ENCODE measurements at regions of chr4 and their contacts with region 1.

Region 1: DNA sequence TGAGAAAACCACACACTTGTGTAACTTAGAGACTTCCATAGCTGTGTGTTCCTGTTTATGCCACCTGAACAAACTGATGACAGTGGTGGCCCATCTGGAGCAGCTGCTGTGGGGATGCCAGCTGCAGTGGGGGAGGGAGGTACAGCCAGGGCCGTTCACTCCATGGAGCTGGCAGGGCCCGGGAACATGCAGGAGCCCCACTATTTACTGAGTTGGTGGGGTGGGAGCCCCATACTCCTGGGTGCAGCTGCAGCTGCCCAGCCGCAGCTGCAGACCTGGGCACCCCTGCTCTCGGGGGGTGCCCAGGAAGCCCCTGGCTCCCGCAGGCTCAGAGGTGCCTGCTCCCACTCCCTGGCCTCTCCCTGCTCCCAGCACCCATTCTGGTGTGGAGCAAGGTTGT is 398.6 kb upstream of the RASGEF1B start:
- DNase-seq: no peak
- ATAC-seq: no peak
- H3K4me3 ChIP-seq: no peak overlapping the region
- H3K27ac ChIP-seq: no peak overlapping the region
- H3K4me1 ChIP-seq: no peaks in the 10 kb centered on the region
- H3K27me3 ChIP-seq: no peaks in the 10 kb centered on the region
- CTCF ChIP-seq: no peak

Region 2: GRCh38 chr4:81884986-81885385 is 14.7 kb after region 1 on chr4:
- intact Hi-C with region 1: loop called in 1 of 10 experiments (anchors 2 kb)
- DNase-seq: no peak
- ATAC-seq: no peak
- H3K4me3 ChIP-seq: no peak overlapping the region
- H3K27ac ChIP-seq: no peak overlapping the region
- H3K4me1 ChIP-seq: no peaks in the 10 kb centered on the region
- H3K27me3 ChIP-seq: peaks cover 0 to 8% (median 0%) of the 10 kb centered on the region in 7 donors
- CTCF ChIP-seq: no peak

Measured in heart right ventricle (tissue), 16 donors.